ENCODE measurements at regions of chr2 and their contacts with region 1.

Region 1: DNA sequence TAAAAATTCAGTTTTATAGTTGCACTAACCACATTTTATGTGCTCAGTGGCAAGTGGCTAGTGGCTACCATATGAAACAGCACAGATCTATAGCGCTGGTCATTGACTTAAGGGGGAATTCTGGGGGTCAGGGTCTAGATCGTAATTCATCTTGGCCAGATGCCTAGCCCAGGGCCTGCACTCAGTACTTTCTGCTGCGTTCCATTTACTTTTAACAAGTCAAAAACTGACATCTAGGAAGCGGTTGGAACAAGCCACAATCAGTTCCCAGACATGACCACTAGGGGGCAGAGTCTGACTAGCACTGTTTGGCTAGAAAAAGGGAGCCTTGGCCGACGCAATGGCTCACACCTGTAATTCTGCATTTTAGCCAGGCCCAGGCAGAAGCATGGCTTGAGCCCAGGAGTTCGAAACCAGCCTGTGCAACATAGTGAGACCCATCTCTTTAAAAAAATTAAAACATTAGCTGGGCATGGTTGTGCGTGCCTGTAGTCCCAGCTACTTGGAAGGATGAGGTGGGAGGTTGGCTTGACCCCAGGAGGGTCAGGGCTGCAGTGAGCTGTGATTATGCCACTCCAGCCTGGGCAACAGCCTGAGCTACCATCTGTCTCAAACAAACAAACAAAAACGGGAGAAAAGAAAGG is 9.0 kb upstream of the TMBIM1 start:
- DNase-seq: peak; percentile 91 to 93
- H3K4me3 ChIP-seq: no peak overlapping the region
- H3K4me3 Mint-ChIP-seq: no peak overlapping the region
- H3K27ac Mint-ChIP-seq: no peak overlapping the region
- H3K4me1 ChIP-seq: peaks cover 18% of the 10 kb centered on the region
- H3K4me1 Mint-ChIP-seq: peaks cover 31% of the 10 kb centered on the region
- H3K27me3 ChIP-seq: no peaks in the 10 kb centered on the region
- H3K27me3 Mint-ChIP-seq: no peaks in the 10 kb centered on the region
- CTCF ChIP-seq: peak; percentile 95 to 96

Region 2: GRCh38 chr2:218360447-218360846 is 59.1 kb after region 1 on chr2:
- CTCF ChIA-PET with region 1: interaction called, 5 read pairs
- POLR2A ChIA-PET with region 1: no interaction called
- intact Hi-C with region 1: loop called (anchors 1 kb)
- DNase-seq: no peak
- H3K4me3 ChIP-seq: no peak overlapping the region
- H3K4me3 Mint-ChIP-seq: no peak overlapping the region
- H3K27ac Mint-ChIP-seq: peak overlapping the region; percentile 48
- H3K4me1 ChIP-seq: peaks cover 50% of the 10 kb centered on the region
- H3K4me1 Mint-ChIP-seq: peaks cover 18% of the 10 kb centered on the region
- H3K27me3 ChIP-seq: no peaks in the 10 kb centered on the region
- H3K27me3 Mint-ChIP-seq: no peaks in the 10 kb centered on the region
- CTCF ChIP-seq: no peak

Region 3: DNA sequence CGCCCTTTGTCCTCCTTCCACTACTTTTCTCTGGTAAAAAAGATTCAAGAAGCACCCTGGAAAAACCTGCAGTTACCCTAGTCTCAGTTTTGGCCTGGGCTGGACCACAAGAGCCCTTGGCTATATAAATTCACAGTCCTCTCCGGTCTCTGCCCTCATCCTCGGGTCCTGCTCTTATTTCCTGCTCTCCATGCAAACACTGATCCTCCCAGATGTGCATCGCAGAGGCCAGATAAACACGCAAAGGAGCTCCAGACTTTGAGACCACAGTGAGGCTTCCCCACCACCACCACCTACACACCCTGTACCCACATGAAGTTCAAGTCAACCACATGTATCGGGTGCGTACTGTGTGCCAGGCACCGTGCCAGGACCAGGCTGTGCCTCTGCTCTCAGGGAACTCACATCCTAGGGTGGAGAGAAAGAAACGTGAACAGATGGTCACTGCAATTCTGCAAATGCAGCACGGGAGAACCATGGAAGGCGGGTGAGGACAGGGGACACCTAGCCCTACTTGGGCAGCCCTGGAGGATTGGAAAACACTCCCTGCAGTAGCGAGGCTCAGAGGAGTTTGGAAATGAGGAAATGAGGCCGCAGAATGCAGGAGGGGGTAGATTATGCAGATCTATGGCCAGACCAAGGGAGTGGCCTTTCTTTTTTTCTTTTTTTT is 105.8 kb after region 1 on chr2:
- CTCF ChIA-PET with region 1: no interaction called
- POLR2A ChIA-PET with region 1: no interaction called
- intact Hi-C with region 1: no loop called
- DNase-seq: no peak
- H3K4me3 ChIP-seq: peak overlapping the region; percentile 39
- H3K4me3 Mint-ChIP-seq: peak overlapping the region; percentile 89
- H3K27ac Mint-ChIP-seq: peak overlapping the region; percentile 99
- H3K4me1 ChIP-seq: peaks cover 27% of the 10 kb centered on the region
- H3K4me1 Mint-ChIP-seq: peaks cover 38% of the 10 kb centered on the region
- H3K27me3 ChIP-seq: no peaks in the 10 kb centered on the region
- H3K27me3 Mint-ChIP-seq: no peaks in the 10 kb centered on the region
- CTCF ChIP-seq: no peak

Region 4: GRCh38 chr2:218466016-218466521 is 164.8 kb after region 1 on chr2:
- CTCF ChIA-PET with region 1: no interaction called
- POLR2A ChIA-PET with region 1: no interaction called
- intact Hi-C with region 1: loop called (anchors 5 kb)
- DNase-seq: no peak
- H3K4me3 ChIP-seq: no peak overlapping the region
- H3K4me3 Mint-ChIP-seq: no peak overlapping the region
- H3K27ac Mint-ChIP-seq: no peak overlapping the region
- H3K4me1 ChIP-seq: no peaks in the 10 kb centered on the region
- H3K4me1 Mint-ChIP-seq: no peaks in the 10 kb centered on the region
- H3K27me3 ChIP-seq: no peaks in the 10 kb centered on the region
- H3K27me3 Mint-ChIP-seq: no peaks in the 10 kb centered on the region
- CTCF ChIP-seq: peak; percentile 21 to 52